ENCODE measurements at regions of chr18 and their contacts with region 1.

Region 1: DNA sequence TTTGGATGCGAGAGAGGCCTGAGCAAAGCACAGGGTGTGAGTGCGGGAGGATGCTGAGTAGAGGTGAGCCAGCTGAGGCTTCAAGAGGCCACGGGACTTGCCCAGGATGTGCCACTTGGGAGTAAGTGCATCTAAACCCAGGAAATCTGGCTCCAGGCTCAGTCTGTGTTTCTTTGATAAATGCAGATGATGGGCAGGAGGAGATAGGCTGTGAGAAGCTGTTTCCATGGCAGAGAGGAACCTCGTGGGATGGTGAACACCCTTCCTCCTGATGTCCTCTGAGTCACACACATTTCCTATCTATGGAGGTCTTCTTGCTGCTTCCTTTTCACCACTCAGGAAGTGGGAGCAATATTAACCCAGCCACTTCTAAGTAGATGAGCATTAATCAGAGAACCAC is 38.4 kb upstream of the CELF4 start:
- DNase-seq: no peak
- H3K4me3 ChIP-seq: no peak overlapping the region
- H3K27ac ChIP-seq: no peak overlapping the region
- H3K4me1 ChIP-seq: no peaks in the 10 kb centered on the region
- H3K27me3 ChIP-seq: no peaks in the 10 kb centered on the region
- CTCF ChIP-seq: no peak
- EP300 ChIP-seq: no peak
- POLR2A ChIP-seq: no peak

Region 2: GRCh38 chr18:37547196-37547827 is 56.7 kb before region 1 on chr18:
- intact Hi-C with region 1: no loop called
- DNase-seq: no peak
- H3K4me3 ChIP-seq: no peak overlapping the region
- H3K27ac ChIP-seq: no peak overlapping the region
- H3K4me1 ChIP-seq: no peaks in the 10 kb centered on the region
- H3K27me3 ChIP-seq: no peaks in the 10 kb centered on the region
- CTCF ChIP-seq: no peak
- EP300 ChIP-seq: no peak
- POLR2A ChIP-seq: no peak

Region 3: DNA sequence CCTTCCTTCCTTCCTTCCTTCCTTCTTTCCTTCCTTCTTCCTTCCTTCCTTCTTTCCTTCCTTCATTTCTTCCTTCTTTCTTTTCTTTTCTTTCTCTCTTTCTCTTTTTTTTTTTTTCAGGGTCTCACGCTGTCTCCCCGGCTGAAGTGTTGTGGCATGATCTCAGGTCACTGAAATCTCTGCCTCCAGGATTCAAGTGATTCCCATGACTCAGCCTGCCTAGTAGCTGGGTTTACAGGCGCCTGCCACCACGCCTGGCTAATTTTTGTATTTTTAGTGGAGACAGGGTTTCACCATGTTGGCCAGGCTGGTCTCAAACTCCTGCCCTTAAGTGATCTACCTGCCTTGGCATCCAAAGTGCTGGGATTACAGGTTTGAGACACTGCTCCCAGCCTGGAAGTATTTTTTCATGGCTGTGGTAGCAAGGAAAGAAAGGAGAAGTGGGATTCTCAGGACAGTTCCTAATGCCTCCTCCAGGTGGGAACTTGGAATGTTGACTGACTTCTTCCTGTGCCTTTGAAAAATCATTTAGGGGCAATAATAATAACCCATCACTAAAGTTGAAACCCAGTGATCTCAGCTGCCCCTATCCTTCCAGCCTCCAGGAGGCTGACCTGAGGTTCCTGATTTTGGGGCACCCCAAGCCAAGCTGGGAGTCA is 50.8 kb after region 1 on chr18:
- intact Hi-C with region 1: no loop called
- DNase-seq: no peak
- H3K4me3 ChIP-seq: no peak overlapping the region
- H3K27ac ChIP-seq: no peak overlapping the region
- H3K4me1 ChIP-seq: no peaks in the 10 kb centered on the region
- H3K27me3 ChIP-seq: no peaks in the 10 kb centered on the region
- CTCF ChIP-seq: no peak
- EP300 ChIP-seq: no peak
- POLR2A ChIP-seq: no peak

Region 4: GRCh38 chr18:38087538-38087937 is 483.5 kb after region 1 on chr18:
- intact Hi-C with region 1: loop called in 1 of 4 experiments (anchors 5 kb)
- DNase-seq: no peak
- H3K4me3 ChIP-seq: no peak overlapping the region
- H3K27ac ChIP-seq: no peak overlapping the region
- H3K4me1 ChIP-seq: no peaks in the 10 kb centered on the region
- H3K27me3 ChIP-seq: no peaks in the 10 kb centered on the region
- CTCF ChIP-seq: no peak
- EP300 ChIP-seq: no peak
- POLR2A ChIP-seq: no peak